ENCODE measurements at regions of chr12 and their contacts with region 1.

Region 1: GRCh38 chr12:57899010-57899662 is 42.2 kb upstream of the ATP23 start:
- DNase-seq: peak; percentile 68
- H3K4me3 Mint-ChIP-seq: peak overlapping the region; percentile 61
- H3K27ac Mint-ChIP-seq: peak overlapping the region; percentile 98
- H3K4me1 Mint-ChIP-seq: peaks cover 45% of the 10 kb centered on the region
- H3K27me3 Mint-ChIP-seq: no peaks in the 10 kb centered on the region

Region 2: DNA sequence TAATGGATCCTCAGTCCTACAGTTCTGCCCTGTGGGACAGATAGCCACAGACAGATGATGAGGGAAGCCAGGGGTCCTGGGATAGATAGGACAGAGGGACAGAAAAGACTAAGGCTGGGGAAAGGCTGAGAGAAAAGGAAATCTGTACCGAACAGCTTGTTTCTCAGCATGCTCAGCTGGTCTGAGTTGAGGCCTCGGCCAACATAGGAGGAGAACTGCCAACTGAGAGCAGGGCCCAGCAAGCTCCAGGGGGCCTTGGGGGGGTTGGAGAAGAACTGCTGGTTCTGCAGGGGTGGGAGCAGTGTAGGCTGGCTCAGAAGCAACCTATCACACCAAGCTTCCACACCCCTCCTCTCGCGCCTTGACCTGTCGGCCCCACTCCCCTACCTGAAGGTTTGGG is 1550.4 kb before region 1 on chr12:
- intact Hi-C with region 1: no loop called
- DNase-seq: no peak
- H3K4me3 Mint-ChIP-seq: no peak overlapping the region
- H3K27ac Mint-ChIP-seq: no peak overlapping the region
- H3K4me1 Mint-ChIP-seq: no peaks in the 10 kb centered on the region
- H3K27me3 Mint-ChIP-seq: no peaks in the 10 kb centered on the region

Region 3: DNA sequence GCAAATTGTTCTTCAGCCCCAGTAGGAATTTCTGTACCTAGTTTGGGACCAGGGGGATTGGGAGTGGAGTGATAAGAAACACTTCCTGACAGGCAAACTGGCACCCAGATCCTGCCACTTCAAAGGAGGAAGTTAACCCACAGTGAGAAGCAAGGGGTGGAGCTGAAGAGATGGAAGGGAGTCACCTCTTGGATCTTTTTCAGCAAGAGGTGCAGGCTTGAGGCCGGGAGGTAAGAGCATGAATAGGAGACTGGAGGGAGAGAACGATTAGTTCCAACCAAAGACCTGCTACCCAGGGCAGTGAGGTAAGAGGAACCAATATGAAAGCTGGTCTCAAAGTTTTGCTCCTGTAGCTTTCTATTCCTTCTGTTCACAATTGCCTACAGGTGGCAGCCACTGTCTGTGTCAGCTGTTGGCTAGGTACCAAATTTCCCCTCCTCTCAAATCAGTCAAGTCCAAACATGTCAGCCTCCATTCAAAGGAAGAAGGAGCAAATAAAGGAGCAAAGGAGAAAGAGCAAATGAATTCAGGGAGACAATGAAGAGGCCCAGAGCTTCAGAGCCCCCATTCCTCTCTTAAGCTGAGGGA is 867.9 kb before region 1 on chr12:
- intact Hi-C with region 1: no loop called
- DNase-seq: no peak
- H3K4me3 Mint-ChIP-seq: no peak overlapping the region
- H3K27ac Mint-ChIP-seq: no peak overlapping the region
- H3K4me1 Mint-ChIP-seq: peaks cover 31% of the 10 kb centered on the region
- H3K27me3 Mint-ChIP-seq: no peaks in the 10 kb centered on the region

Region 4: GRCh38 chr12:57583008-57583831 is 315.9 kb before region 1 on chr12:
- intact Hi-C with region 1: loop called (anchors 10 kb)
- DNase-seq: peak; percentile 60
- H3K4me3 Mint-ChIP-seq: no peak overlapping the region
- H3K27ac Mint-ChIP-seq: no peak overlapping the region
- H3K4me1 Mint-ChIP-seq: peaks cover 2% of the 10 kb centered on the region
- H3K27me3 Mint-ChIP-seq: peaks cover 2% of the 10 kb centered on the region

Region 5: DNA sequence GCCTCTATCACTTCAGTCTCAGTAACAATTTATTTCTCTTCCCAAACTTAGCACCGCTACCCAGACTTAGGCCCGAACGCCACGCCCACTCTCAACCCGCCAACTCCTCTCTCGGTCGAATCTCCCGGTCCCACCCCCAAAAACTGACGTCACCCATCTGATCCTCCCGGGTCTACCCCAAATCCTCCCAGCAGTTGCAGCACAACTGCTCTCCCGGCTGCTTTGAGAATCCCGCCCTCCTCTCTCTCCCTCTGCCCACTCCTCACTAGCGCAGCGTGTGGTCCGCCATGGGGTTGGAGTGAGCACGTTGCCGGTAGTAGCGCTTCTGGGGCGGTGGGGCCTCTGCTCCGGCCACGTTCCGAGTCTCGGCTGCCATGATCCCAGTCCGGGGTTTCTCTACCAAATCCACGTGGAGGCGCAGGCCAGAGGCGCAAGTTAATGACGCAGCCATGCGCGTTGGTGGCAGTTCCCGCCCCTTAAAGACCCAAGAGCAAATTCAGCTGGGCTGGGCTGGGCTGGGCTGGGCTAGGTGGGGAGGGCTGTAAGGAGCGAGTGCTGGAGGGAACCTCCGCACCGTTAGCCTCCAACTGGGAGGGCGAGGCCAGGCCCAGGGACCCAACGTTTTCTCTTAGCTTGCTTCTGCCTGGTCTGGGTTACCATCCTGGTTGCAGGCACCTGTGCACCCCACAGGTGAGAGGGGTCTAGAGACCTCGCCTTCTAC is 127.3 kb before region 1 on chr12 and contains the start of gene METTL1:
- intact Hi-C with region 1: loop called (anchors 2 kb)
- DNase-seq: peak; percentile 90
- H3K4me3 Mint-ChIP-seq: peak within 1 kb of the TSS; percentile 97
- H3K27ac Mint-ChIP-seq: peak within 1 kb of the TSS; percentile 99
- H3K4me1 Mint-ChIP-seq: peaks cover 11% of the 10 kb centered on the region
- H3K27me3 Mint-ChIP-seq: no peaks in the 10 kb centered on the region
- total RNA-seq, gene METTL1: 61.2 and 64.5 TPM in 2 replicates

Region 6: GRCh38 chr12:57865090-57865751 is 33.9 kb before region 1 on chr12:
- intact Hi-C with region 1: loop called (anchors 2 kb)
- DNase-seq: no peak
- H3K4me3 Mint-ChIP-seq: peak overlapping the region; percentile 76
- H3K27ac Mint-ChIP-seq: peak overlapping the region; percentile 65
- H3K4me1 Mint-ChIP-seq: peaks cover 8% of the 10 kb centered on the region
- H3K27me3 Mint-ChIP-seq: peaks cover 13% of the 10 kb centered on the region

Region 7: GRCh38 chr12:57935839-57936512 is 36.8 kb after region 1 on chr12:
- intact Hi-C with region 1: loop called (anchors 5 kb)
- DNase-seq: peak; percentile 94
- H3K4me3 Mint-ChIP-seq: peak overlapping the region; percentile 88
- H3K27ac Mint-ChIP-seq: peak overlapping the region; percentile 96
- H3K4me1 Mint-ChIP-seq: peaks cover 32% of the 10 kb centered on the region
- H3K27me3 Mint-ChIP-seq: no peaks in the 10 kb centered on the region